GM12878 (cell line): ENCODE measurements at regions of chr9 and their contacts with region 1.

Region 1: DNA sequence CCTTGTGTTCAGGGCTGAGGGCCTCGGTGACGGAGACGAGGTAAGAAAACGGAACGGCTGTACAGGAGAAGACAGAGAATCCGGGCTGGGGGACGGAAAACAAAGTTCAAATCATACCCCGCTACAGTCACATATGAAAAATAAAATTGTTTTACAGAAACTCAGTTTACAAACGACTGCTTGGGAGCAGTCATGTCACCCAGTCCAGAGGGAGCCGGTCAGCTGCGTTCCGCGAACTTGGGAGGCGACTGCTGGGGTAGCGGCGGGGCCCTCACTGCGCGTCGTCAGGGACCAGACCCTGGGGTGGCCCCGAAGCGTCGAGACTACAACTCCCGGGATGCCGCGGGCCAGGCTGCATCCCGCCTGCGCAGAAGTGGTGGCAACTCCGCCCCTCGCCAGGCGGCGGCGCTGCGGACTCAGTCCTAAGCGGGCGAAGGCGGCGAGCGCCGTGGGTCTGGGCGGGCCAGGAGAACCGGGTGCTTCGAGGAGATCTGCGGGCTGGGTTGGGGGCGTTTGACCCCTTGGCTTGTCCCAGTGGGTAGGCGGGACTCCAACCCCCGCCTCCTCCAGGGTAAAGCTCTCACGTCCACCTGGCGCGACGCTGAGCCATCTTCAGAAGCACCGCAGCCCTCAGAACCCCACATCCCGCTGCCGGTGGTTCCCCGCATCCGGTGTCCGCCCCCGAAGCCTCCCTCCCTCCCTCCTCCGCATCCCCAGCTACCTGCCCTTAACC is 4.0 kb downstream of the SIT1 start:
- DNase-seq: no peak
- ATAC-seq: peak; percentile 90
- H3K4me3 ChIP-seq: peak overlapping the region; percentile 96
- H3K27ac ChIP-seq: peak overlapping the region; percentile 89
- H3K4me1 ChIP-seq: peaks cover 27% of the 10 kb centered on the region
- H3K27me3 ChIP-seq: no peaks in the 10 kb centered on the region
- CTCF ChIP-seq: peak; percentile 98
- EP300 ChIP-seq: no peak
- POLR2A ChIP-seq: peak; percentile 74
- RAD21 ChIP-seq: peak; percentile 79

Region 2: GRCh38 chr9:35603987-35604577 is 42.6 kb before region 1 on chr9:
- CTCF ChIA-PET with region 1: interaction called, 53 read pairs
- POLR2A ChIA-PET with region 1: interaction called, 7 read pairs
- RAD21 ChIA-PET with region 1: interaction called, 57 read pairs
- SMC1A ChIA-PET with region 1: interaction called, 34 read pairs
- in situ Hi-C with region 1: no loop called
- intact Hi-C with region 1: loop called (anchors 2 kb)
- DNase-seq: peak; percentile 98
- ATAC-seq: peak; percentile 97
- H3K4me3 ChIP-seq: peak overlapping the region; percentile 77
- H3K27ac ChIP-seq: peak overlapping the region; percentile 73
- H3K4me1 ChIP-seq: peaks cover 8% of the 10 kb centered on the region
- H3K27me3 ChIP-seq: no peaks in the 10 kb centered on the region
- CTCF ChIP-seq: peak; percentile 81 to 98 (median 90)
- EP300 ChIP-seq: no peak
- POLR2A ChIP-seq: peak; percentile 81
- RAD21 ChIP-seq: peak; percentile 76

Region 3: GRCh38 chr9:35616681-35617459 is 29.8 kb before region 1 on chr9:
- CTCF ChIA-PET with region 1: interaction called, 101 read pairs
- POLR2A ChIA-PET with region 1: interaction called, 85 read pairs
- RAD21 ChIA-PET with region 1: interaction called, 47 read pairs
- SMC1A ChIA-PET with region 1: interaction called, 36 read pairs
- in situ Hi-C with region 1: no loop called
- intact Hi-C with region 1: no loop called
- DNase-seq: no peak
- ATAC-seq: peak; percentile 71
- H3K4me3 ChIP-seq: peak overlapping the region; percentile 72
- H3K27ac ChIP-seq: peak overlapping the region; percentile 57
- H3K4me1 ChIP-seq: peaks cover 44% of the 10 kb centered on the region
- H3K27me3 ChIP-seq: no peaks in the 10 kb centered on the region; a peak in 1 of 4 replicates
- CTCF ChIP-seq: peak; percentile 21 to 37 (median 34); a peak in 4 of 6 replicates
- EP300 ChIP-seq: no peak
- POLR2A ChIP-seq: peak; percentile 80
- RAD21 ChIP-seq: 0 out of 2 replicates have a peak, but pooled peaks have one; percentile 31

Region 4: DNA sequence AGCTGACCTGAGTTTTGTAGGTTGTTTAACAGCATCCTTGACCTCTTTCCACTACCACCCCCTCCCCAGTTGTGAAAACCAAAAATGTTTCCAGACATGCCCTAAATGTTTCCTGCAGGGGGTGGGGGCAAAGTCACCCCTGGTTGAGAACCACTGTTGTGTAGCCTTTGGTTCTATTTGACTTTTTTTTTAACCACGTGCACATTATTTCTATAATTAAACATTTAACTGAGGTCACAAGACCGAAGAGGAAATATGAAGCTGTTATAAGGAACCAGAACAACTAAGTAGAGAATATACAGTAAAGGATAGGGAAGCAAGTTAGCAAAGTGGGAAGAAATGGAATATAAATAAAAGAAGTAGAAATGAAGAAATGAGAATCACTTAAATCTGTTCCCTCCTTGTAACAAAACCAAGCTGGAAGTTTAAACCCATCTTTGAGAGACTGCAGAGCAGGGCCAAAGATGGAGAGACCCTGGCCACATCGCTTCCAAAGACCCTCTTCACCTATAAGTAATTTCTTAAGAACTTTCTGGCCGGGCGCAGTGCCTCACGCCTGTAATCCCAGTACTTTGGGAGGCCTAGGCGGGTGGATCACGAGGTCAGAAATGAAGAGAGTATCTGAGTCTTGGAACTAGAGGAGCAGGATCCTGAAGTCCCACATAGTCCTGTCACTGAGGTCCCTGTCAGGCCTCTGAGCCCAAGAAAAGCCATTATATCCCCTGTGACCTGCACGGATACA is 10.4 kb before region 1 on chr9:
- CTCF ChIA-PET with region 1: interaction called, 31 read pairs
- POLR2A ChIA-PET with region 1: interaction called, 12 read pairs
- RAD21 ChIA-PET with region 1: interaction called, 6 read pairs
- SMC1A ChIA-PET with region 1: interaction called, 32 read pairs
- in situ Hi-C with region 1: no loop called
- intact Hi-C with region 1: no loop called
- DNase-seq: no peak
- ATAC-seq: no peak; the same call in 1 of the 3 replicates
- H3K4me3 ChIP-seq: no peak overlapping the region
- H3K27ac ChIP-seq: no peak overlapping the region
- H3K4me1 ChIP-seq: peaks cover 25% of the 10 kb centered on the region
- H3K27me3 ChIP-seq: no peaks in the 10 kb centered on the region
- CTCF ChIP-seq: no peak
- EP300 ChIP-seq: no peak
- POLR2A ChIP-seq: no peak
- RAD21 ChIP-seq: no peak

Region 5: DNA sequence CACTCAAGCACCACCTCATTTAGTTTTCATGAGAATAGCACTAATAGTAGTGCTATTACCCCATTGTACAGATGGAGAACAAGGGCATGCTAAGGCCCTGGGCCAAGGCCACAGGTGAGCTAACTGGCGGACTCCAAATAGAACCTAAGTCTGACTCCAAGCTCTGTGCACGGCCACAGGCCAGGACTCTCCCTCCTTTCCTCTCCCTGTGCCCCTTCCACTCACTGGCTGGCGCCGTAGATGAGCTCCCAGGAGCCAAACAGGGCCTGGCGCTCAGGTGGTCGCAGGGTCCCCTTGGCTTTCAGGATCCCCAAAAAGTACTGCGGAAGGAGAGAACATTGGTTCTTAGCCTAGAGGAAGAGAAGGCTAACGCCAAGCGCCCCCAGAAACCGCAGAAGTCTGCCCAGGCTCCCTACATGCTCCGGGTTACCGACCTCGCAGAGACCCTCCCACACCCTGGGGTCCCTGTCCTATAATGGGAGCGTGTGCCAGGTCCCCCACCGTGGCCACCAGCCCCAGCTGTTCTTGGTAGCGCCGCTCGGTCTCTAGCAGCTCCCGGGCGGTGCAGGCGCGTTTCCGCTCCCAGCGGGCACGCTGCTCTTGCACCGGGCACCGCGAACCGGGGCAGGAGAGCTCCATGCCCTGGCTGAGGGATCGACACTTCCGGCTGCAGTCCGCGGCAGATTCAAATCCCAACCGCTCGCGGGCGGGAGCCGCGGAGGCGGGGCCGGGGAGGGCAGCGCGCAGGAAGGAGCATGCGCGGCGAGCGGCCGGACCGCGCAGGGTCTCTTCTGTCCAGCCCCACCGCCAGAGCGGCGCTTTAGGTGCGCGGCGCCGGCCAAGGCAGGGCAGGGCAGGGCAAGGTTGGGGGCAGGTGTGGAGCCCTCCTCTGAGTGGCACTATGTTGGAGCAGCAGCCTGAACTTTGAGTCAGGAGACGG is 18.1 kb after region 1 on chr9 and contains the start of gene ARHGEF39:
- CTCF ChIA-PET with region 1: interaction called, 116 read pairs
- POLR2A ChIA-PET with region 1: interaction called, 163 read pairs
- RAD21 ChIA-PET with region 1: interaction called, 95 read pairs
- SMC1A ChIA-PET with region 1: interaction called, 114 read pairs
- in situ Hi-C with region 1: no loop called
- intact Hi-C with region 1: no loop called
- DNase-seq: no peak
- ATAC-seq: peak; percentile 92
- H3K4me3 ChIP-seq: peak within 1 kb of the TSS; percentile 79
- H3K27ac ChIP-seq: peak within 1 kb of the TSS; percentile 85
- H3K4me1 ChIP-seq: peaks cover 33% of the 10 kb centered on the region
- H3K27me3 ChIP-seq: no peaks in the 10 kb centered on the region
- CTCF ChIP-seq: peak; percentile 15 to 44 (median 18); a peak in 3 of 6 replicates
- EP300 ChIP-seq: no peak
- POLR2A ChIP-seq: peak; percentile 83
- RAD21 ChIP-seq: 0 out of 2 replicates have a peak, but pooled peaks have one; percentile 7
- polyA plus RNA-seq, gene ARHGEF39: 2.0 to 5.0 TPM

Region 6: GRCh38 chr9:35696525-35697215 is 50.0 kb after region 1 on chr9:
- CTCF ChIA-PET with region 1: interaction called, 57 read pairs
- POLR2A ChIA-PET with region 1: interaction called, 4 read pairs
- RAD21 ChIA-PET with region 1: interaction called, 9 read pairs
- SMC1A ChIA-PET with region 1: interaction called, 50 read pairs
- in situ Hi-C with region 1: no loop called
- intact Hi-C with region 1: no loop called
- DNase-seq: no peak
- ATAC-seq: peak; percentile 99
- H3K4me3 ChIP-seq: no peak overlapping the region
- H3K27ac ChIP-seq: no peak overlapping the region
- H3K4me1 ChIP-seq: no peaks in the 10 kb centered on the region
- H3K27me3 ChIP-seq: no peaks in the 10 kb centered on the region
- CTCF ChIP-seq: peak; percentile 78 to 98 (median 97)
- EP300 ChIP-seq: no peak
- POLR2A ChIP-seq: no peak
- RAD21 ChIP-seq: peak; percentile 61

Region 7: GRCh38 chr9:35814841-35815543 is 168.3 kb after region 1 on chr9 and contains the start of gene HINT2:
- CTCF ChIA-PET with region 1: interaction called, 12 read pairs
- POLR2A ChIA-PET with region 1: interaction called, 3 read pairs
- RAD21 ChIA-PET with region 1: interaction called, 8 read pairs
- SMC1A ChIA-PET with region 1: interaction called, 5 read pairs
- in situ Hi-C with region 1: no loop called
- intact Hi-C with region 1: loop called (anchors 10 kb)
- DNase-seq: peak; percentile 95
- ATAC-seq: peak; percentile 92
- H3K4me3 ChIP-seq: peak within 1 kb of the TSS; percentile 79
- H3K27ac ChIP-seq: peak within 1 kb of the TSS; percentile 75
- H3K4me1 ChIP-seq: peaks cover 33% of the 10 kb centered on the region
- H3K27me3 ChIP-seq: no peaks in the 10 kb centered on the region; a peak in 1 of 4 replicates
- CTCF ChIP-seq: no peak
- EP300 ChIP-seq: no peak
- POLR2A ChIP-seq: peak; percentile 95
- RAD21 ChIP-seq: no peak
- polyA plus RNA-seq, gene HINT2: 12.1 to 32.0 TPM

Region 8: GRCh38 chr9:36306471-36307306 is 660.0 kb after region 1 on chr9:
- CTCF ChIA-PET with region 1: no interaction called
- POLR2A ChIA-PET with region 1: no interaction called
- RAD21 ChIA-PET with region 1: no interaction called
- SMC1A ChIA-PET with region 1: no interaction called
- in situ Hi-C with region 1: no loop called
- intact Hi-C with region 1: no loop called
- DNase-seq: no peak
- ATAC-seq: no peak
- H3K4me3 ChIP-seq: no peak overlapping the region
- H3K27ac ChIP-seq: no peak overlapping the region
- H3K4me1 ChIP-seq: no peaks in the 10 kb centered on the region
- H3K27me3 ChIP-seq: no peaks in the 10 kb centered on the region
- CTCF ChIP-seq: no peak
- EP300 ChIP-seq: no peak
- POLR2A ChIP-seq: no peak
- RAD21 ChIP-seq: no peak